ENCODE measurements at regions of chr7 and their contacts with region 1.

Region 1: DNA sequence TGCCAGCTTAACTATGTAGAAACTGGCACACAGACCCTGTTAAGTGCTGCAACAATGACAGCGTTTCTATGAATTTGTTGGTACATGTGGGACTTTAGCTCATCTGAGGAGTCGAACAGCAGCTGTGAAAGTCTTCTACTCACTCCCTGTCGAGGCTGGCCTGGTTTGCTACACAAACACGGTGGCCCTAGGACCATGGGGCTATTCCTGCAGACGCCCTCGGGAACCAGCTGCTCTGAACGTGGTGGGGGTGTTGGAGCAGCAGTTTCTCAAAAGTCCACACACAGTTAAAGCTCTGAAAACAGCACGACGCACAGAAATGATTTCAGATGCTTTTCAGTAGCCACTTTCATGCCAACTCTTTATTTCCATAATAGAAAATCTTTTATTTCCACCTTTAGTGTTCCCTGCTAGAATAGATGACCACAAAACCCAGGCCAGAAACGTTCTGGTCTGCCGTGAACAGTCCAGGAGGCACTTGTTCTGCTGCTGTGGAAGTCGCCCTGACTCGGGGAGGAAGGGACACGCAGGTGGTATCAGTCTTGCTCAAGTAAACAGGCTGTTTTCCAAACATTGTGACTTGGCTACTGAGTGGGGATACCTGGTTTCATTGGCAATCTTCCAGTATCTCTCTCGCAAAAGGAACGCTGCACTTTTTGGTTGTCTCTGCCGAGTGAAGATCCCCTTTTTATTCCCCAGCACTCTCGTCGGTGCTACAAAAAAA is 21.5 kb downstream of the GUSB start:
- DNase-seq: no peak
- ATAC-seq: no peak
- H3K4me3 ChIP-seq: no peak overlapping the region
- H3K4me3 Mint-ChIP-seq: no peak overlapping the region
- H3K27ac ChIP-seq: no peak overlapping the region
- H3K27ac Mint-ChIP-seq: no peak overlapping the region
- H3K4me1 ChIP-seq: no peaks in the 10 kb centered on the region
- H3K4me1 Mint-ChIP-seq: no peaks in the 10 kb centered on the region
- H3K27me3 ChIP-seq: no peaks in the 10 kb centered on the region
- H3K27me3 Mint-ChIP-seq: no peaks in the 10 kb centered on the region

Region 2: GRCh38 chr7:65923316-65923715 is 37.2 kb before region 1 on chr7:
- CTCF ChIA-PET with region 1: no interaction called
- POLR2A ChIA-PET with region 1: no interaction called
- DNase-seq: no peak
- ATAC-seq: no peak
- H3K4me3 ChIP-seq: no peak overlapping the region
- H3K4me3 Mint-ChIP-seq: no peak overlapping the region
- H3K27ac ChIP-seq: no peak overlapping the region
- H3K27ac Mint-ChIP-seq: no peak overlapping the region
- H3K4me1 ChIP-seq: no peaks in the 10 kb centered on the region
- H3K4me1 Mint-ChIP-seq: peaks cover 3 to 8% (median 4%) of the 10 kb centered on the region in 3 donors
- H3K27me3 ChIP-seq: no peaks in the 10 kb centered on the region
- H3K27me3 Mint-ChIP-seq: no peaks in the 10 kb centered on the region

Region 3: GRCh38 chr7:65971021-65971420 is 10.5 kb after region 1 on chr7:
- CTCF ChIA-PET with region 1: no interaction called
- POLR2A ChIA-PET with region 1: interaction called in 1 of 2 experiments, 11 read pairs
- DNase-seq: no peak
- ATAC-seq: no peak
- H3K4me3 ChIP-seq: no peak overlapping the region
- H3K4me3 Mint-ChIP-seq: no peak overlapping the region
- H3K27ac ChIP-seq: no peak overlapping the region
- H3K27ac Mint-ChIP-seq: no peak overlapping the region
- H3K4me1 ChIP-seq: no peaks in the 10 kb centered on the region
- H3K4me1 Mint-ChIP-seq: no peaks in the 10 kb centered on the region
- H3K27me3 ChIP-seq: no peaks in the 10 kb centered on the region
- H3K27me3 Mint-ChIP-seq: no peaks in the 10 kb centered on the region

Measured in T-cell (primary cell).